GM13976 (cell line): ENCODE measurements at regions of chr15 and their contacts with region 1.

Region 1: DNA sequence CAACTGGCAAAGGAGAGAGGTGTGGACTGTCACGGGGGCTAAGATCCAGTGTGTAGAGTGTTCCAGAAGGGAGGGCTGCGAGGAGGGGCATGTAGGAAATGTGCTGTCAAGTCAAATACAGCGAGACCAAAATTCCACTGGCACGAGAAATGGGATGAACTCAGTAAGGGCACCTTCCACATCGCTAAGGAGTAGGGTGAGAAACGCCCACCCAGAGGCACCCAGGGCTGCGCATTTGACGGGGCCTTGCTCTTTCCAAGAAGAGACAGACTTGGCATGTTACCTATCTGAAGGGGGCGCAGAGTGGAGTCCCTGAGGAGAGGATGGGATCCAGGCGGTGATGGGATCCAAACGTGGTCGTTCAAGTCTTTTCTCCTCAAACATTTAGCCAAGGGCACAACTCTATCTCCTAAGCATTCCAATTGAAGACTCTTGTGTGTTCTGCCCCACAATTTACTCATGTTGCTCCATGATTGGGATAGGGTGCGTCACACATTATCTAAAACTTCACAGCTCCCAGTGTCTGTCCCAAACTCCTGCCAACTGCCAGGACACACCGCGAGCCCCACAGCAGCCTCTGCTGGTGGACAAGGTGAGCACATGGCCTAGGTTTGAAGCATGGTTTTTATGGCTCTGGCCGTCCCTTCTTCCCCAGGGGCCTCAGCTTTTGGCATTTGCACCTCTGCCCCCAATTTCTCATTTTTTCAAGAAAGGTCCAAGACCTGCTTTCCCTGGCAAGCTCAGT is 7.6 kb downstream of the SELENOS start:
- DNase-seq: no peak
- CTCF ChIP-seq: peak; percentile 18

Region 2: DNA sequence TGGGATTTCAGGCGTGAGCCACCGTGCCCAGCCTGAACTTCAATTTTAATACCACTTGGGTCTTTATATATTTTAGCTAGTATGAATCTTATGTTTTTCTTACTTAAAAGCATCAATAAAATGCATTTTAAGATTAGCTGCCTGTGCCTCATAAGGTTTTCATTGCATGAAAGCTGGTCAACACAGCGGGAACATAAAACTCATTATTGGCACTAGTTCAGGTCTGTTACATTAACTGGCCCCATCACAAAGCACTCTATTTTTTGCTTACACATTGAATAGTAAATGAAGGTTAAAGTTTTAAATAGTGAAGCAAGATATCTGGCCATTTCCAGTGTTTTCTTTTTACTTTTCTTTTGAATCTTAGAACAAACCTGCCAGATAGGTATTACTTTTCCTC is 1390.8 kb before region 1 on chr15:
- in situ Hi-C with region 1: no loop called
- DNase-seq: no peak
- CTCF ChIP-seq: no peak

Region 3: GRCh38 chr15:101014921-101015841 is 254.5 kb before region 1 on chr15:
- in situ Hi-C with region 1: loop called (anchors 10 kb)
- DNase-seq: peak; percentile 85
- CTCF ChIP-seq: peak; percentile 78

Region 4: DNA sequence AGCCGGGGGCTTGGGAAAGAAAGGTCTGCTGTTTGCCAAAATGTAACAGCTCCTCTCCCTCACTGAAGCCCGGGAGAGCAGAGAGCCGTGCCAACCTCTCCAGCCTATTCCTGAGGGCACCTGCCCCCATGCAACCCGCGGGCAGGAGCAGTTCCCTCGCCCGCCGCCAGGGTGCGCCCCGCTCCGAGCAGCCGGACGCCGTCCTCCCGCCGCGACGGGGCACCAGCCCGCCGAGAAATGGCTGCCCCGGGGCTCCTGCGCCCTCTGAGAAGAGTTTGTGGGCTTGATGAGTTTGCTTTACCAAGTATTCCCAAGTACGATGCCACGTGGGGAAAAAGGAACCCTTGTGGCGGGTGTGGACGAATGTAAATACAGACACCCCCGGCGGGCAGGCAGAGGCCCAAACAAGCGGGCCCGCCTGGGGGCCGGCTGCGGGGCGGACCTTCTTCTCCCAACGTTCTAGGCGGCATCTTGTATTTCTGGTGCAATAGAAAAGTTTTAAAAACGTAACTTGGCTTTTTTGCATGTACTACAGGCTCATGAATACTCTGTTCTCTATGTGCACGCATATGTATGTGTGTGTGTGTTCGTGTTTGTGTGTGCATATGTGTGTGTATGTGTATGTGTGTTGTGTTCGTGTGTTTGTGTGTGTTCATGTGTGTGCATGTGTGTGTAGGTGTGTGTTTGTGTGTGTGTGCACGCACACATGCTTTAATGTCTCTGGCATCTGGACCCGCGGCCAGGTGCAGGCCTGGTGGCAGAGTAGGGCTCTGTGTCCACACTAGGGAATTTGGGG is 180.7 kb before region 1 on chr15:
- in situ Hi-C with region 1: loop called (anchors 5 kb)
- DNase-seq: peak; percentile 90
- CTCF ChIP-seq: peak; percentile 98